ENCODE measurements at regions of chr10 and their contacts with region 1.

Region 1: GRCh38 chr10:69506834-69507721 is 55.8 kb downstream of the TSPAN15 start:
- DNase-seq: peak in 1 of 35 experiments; percentile 53
- ATAC-seq: peak in 3 of 4 experiments; percentile 1 to 20 (median 10)
- H3K4me3 ChIP-seq: peak overlapping the region in 1 of 2 donors; percentile 2
- H3K4me3 Mint-ChIP-seq: peak overlapping the region; percentile 57 to 61 (median 61)
- H3K27ac ChIP-seq: peak overlapping the region; percentile 72
- H3K27ac Mint-ChIP-seq: peak overlapping the region; percentile 70 to 84
- H3K4me1 ChIP-seq: peaks cover 0 to 15% of the 10 kb centered on the region in 2 experiments
- H3K4me1 Mint-ChIP-seq: peaks cover 10 to 19% (median 11%) of the 10 kb centered on the region in 3 donors
- H3K27me3 ChIP-seq: peaks cover 0 to 2% of the 10 kb centered on the region in 2 experiments
- H3K27me3 Mint-ChIP-seq: no peaks in the 10 kb centered on the region

Region 2: DNA sequence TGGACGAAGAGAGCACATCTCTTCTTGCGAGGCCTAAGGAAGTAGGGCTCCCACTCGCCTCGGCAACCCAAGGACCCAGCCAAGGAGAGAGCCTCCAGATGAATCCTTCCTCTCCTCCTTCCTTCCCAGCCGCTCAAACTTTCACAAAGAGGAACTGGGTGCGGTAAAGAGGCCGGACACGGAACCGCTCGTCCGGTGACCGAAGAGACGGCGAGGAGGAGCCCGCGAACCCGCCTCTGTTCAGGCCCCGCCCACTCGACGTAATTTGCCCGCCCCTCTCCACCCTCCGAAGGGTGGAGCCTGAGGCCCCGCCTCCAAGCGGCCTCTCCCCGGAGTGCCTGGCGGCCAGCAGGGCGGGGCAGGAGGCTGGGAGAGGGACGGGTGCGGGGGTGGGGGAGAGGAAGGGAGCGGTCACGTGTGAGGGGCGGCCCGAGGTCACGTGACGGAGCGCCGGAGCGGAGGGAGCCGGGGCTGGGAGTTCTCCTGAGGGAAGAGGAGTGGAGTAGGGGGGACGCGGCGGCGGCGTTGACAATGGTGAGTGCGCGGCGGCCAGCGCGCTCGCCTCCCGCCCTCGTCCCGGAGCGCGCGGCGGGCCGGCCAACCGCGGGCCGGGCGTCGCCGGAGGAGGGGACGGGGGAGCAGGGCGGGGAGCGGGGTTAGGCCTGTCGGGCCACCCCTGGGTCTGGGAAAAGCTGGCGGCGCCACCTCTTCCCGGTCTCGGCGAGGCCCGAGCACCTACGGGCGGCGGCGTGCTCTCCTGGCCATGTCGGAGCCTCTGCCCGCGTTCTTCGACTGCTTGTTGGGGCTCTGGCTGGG is 383.1 kb before region 1 on chr10 and contains the start of gene VPS26A:
- CTCF ChIA-PET with region 1: no interaction called
- POLR2A ChIA-PET with region 1: no interaction called
- DNase-seq: peak; percentile 96 to 99 (median 98)
- ATAC-seq: peak; percentile 91 to 97 (median 94)
- H3K4me3 ChIP-seq: peak within 1 kb of the TSS; percentile 81 to 85
- H3K4me3 Mint-ChIP-seq: peak within 1 kb of the TSS; percentile 92 to 95 (median 92)
- H3K27ac ChIP-seq: peak within 1 kb of the TSS; percentile 96
- H3K27ac Mint-ChIP-seq: peak within 1 kb of the TSS; percentile 96 to 98
- H3K4me1 ChIP-seq: peaks cover 15 to 37% of the 10 kb centered on the region in 2 experiments
- H3K4me1 Mint-ChIP-seq: peaks cover 18 to 33% (median 32%) of the 10 kb centered on the region in 3 donors
- H3K27me3 ChIP-seq: no peaks in the 10 kb centered on the region
- H3K27me3 Mint-ChIP-seq: no peaks in the 10 kb centered on the region
- total RNA-seq, gene VPS26A: 24.6 to 35.8 (median 28.2) TPM

Region 3: GRCh38 chr10:69209787-69210484 is 297.1 kb before region 1 on chr10:
- CTCF ChIA-PET with region 1: interaction called in 1 of 2 experiments, 13 read pairs
- POLR2A ChIA-PET with region 1: no interaction called
- DNase-seq: no peak
- ATAC-seq: no peak
- H3K4me3 ChIP-seq: no peak overlapping the region
- H3K4me3 Mint-ChIP-seq: no peak overlapping the region
- H3K27ac ChIP-seq: no peak overlapping the region
- H3K27ac Mint-ChIP-seq: no peak overlapping the region
- H3K4me1 ChIP-seq: peaks cover 0 to 18% of the 10 kb centered on the region in 2 experiments
- H3K4me1 Mint-ChIP-seq: peaks cover 5 to 18% (median 15%) of the 10 kb centered on the region in 3 donors
- H3K27me3 ChIP-seq: no peaks in the 10 kb centered on the region
- H3K27me3 Mint-ChIP-seq: no peaks in the 10 kb centered on the region

Measured in T-cell (primary cell).